Posterior cingulate gyrus (tissue), 11 donors: ENCODE measurements at regions of chr9 and their contacts with region 1.

Region 1: DNA sequence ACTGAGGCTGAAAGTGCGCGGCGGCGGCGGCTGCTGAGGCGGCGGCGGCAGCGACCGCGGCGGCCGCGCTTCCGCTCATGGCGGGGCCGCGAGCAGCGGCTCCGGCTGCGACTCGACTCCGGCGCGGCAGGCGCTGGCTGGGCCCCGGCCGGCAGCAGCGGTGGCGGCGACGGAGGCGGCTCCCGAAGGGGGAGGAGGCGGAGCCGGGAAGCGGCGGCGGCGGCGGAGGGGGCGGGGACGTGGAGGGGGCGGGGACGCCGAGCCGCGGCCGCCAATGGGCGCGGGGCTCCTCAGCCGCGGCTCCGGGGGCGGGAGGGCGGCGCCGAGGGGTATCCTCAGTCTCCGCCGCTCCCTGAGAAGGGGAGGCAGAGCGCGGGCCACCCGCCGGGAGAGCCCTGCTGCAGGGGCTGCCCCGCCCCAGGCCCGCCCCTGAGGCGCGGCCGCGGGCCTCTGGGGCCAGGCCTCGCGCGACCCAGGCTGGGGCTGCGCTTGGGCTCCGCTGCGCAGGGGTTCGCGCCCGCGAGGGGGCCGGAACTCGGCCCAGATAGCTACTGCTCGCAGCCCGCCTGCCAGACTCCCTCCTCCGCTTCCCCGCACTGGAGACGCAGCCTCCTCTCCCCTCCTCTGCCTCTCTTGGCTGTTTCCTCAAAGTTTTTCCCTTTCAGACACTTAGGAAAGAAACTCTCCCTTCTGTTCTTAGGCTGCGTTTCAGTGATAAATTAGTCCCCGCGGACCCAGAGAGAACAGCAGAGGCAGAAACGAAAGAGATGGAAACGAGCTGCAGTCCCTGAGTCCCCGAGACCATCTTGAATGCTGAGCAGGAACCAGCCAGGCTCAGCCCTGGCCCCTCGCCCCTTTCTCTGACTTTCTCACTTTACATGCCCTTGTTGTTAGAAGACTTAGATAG is 85.0 kb upstream of the MELK start:
- DNase-seq: peak; percentile 72 to 99 (median 86)

Region 2: DNA sequence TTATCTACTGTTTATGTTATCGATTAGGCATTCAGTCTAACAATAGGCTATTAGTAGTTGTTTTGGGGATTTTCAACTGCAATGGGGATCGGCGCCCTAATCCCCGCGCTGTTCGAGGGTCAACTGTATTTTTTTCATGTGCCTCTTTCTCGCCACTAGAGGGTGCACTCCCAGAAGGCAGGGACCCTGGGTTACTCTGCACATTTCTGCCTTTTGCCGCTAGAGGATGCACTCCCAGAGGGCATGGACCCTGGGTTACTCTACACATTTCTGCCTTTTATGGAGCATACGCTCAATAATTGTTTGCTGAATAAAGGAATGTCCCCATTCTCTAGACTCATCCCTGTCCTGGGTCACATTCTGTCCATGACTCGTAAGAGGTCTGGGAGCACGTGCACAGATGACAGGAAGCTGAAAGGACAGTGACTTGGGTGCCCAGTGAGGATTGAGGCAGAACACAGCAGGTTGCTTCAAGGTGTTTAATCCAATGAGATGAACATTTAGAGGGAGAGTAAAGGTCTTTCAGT is 478.9 kb before region 1 on chr9:
- intact Hi-C with region 1: no loop called
- DNase-seq: peak in 6 of 10 donors; percentile 9 to 89 (median 49)

Region 3: GRCh38 chr9:36190388-36191287 is 297.1 kb before region 1 on chr9 and contains the start of gene CLTA:
- intact Hi-C with region 1: no loop called
- DNase-seq: peak; percentile 93 to 99 (median 98)

Region 4: GRCh38 chr9:36400332-36401163 is 87.2 kb before region 1 on chr9:
- intact Hi-C with region 1: loop called (anchors 1 kb)
- DNase-seq: peak; percentile 79 to 97 (median 84)

Region 5: GRCh38 chr9:36572515-36573418 is 85.0 kb after region 1 on chr9 and contains the start of gene MELK:
- intact Hi-C with region 1: loop called (anchors 5 kb)
- DNase-seq: peak; percentile 50 to 96 (median 77)

Region 6: DNA sequence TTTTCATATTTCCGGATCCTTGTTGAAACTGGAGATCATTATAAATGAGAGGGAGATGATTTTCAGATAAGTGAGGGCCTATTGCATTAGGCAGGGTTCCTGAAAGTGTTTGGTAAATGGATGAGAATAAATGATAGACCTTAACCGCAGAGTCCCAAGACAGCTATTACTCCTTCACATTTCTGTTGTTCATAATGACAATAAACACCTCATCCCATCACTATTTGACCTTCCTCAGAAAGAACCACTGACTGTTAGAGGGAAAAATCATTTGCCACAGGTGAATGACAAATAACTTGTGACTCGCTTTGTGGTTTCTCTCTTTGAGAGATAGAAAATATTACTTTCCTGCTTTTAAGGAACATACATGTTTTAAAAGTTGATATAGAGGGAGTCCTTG is 1218.6 kb after region 1 on chr9:
- intact Hi-C with region 1: no loop called
- DNase-seq: no peak